H1 (cell line): ENCODE measurements at regions of chr11 and their contacts with region 1.

Region 1: DNA sequence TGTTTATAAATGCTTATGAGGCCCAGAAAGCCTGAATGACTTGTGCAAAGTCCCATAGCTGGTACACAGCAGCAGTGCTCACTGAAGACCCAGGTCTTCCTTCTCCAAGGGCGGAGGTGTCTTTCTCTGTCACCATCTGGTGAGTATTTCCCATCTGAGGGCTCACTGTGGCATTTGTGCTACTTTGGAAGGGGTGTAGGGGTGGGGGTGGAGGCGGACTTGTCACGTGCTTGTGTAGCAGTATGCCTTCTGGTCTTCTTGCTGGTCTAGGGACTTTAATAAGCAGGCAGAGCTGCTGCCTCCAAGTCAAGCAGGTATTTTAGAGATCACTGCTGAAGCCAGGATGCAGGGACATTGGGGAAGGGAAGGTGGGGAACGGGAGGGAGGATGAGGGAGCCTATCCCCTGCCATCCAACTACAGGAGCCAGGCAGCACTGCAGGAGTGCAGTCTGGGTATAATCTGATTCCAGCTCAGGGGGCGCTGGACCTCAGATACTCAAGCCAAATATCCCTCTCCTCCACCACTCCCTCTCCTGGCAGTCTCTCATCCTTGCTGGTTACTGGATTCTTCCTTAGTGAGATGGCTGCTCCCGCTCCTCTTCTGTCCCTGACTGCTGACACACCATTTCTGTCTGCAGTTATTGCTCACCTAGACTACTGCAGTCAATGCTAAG is 3.4 kb downstream of the ABCC8 start:
- DNase-seq: peak; percentile 50 to 73
- H3K4me3 ChIP-seq: no peak overlapping the region
- H3K27ac ChIP-seq: no peak overlapping the region
- H3K4me1 ChIP-seq: peaks cover 0 to 10% (median 6%) of the 10 kb centered on the region in 4 experiments; a peak in 5 of 7 replicates
- H3K27me3 ChIP-seq: peaks cover 32 to 47% (median 47%) of the 10 kb centered on the region in 4 experiments
- CTCF ChIP-seq: peak; percentile 84 to 100 (median 99)
- EP300 ChIP-seq: no peak
- POLR2A ChIP-seq: no peak
- RAD21 ChIP-seq: peak; percentile 64 to 77

Region 2: GRCh38 chr11:16969010-16969999 is 503.9 kb before region 1 on chr11:
- CTCF ChIA-PET with region 1: no interaction called
- POLR2A ChIA-PET with region 1: no interaction called
- DNase-seq: no peak
- H3K4me3 ChIP-seq: no peak overlapping the region
- H3K27ac ChIP-seq: no peak overlapping the region
- H3K4me1 ChIP-seq: 0 out of 7 replicates have a peak, but pooled peaks cover 0 to 4% (median 0%) of the 10 kb centered on the region in 4 experiments
- H3K27me3 ChIP-seq: no peaks in the 10 kb centered on the region
- CTCF ChIP-seq: no peak
- EP300 ChIP-seq: no peak
- POLR2A ChIP-seq: no peak
- RAD21 ChIP-seq: no peak

Region 3: GRCh38 chr11:17333799-17334586 is 139.2 kb before region 1 on chr11:
- CTCF ChIA-PET with region 1: no interaction called
- POLR2A ChIA-PET with region 1: no interaction called
- DNase-seq: no peak
- H3K4me3 ChIP-seq: no peak overlapping the region
- H3K27ac ChIP-seq: no peak overlapping the region
- H3K4me1 ChIP-seq: peaks cover 0 to 2% (median 0%) of the 10 kb centered on the region in 4 experiments; a peak in 1 of 7 replicates
- H3K27me3 ChIP-seq: no peaks in the 10 kb centered on the region
- CTCF ChIP-seq: no peak
- EP300 ChIP-seq: no peak
- POLR2A ChIP-seq: no peak
- RAD21 ChIP-seq: no peak

Region 4: DNA sequence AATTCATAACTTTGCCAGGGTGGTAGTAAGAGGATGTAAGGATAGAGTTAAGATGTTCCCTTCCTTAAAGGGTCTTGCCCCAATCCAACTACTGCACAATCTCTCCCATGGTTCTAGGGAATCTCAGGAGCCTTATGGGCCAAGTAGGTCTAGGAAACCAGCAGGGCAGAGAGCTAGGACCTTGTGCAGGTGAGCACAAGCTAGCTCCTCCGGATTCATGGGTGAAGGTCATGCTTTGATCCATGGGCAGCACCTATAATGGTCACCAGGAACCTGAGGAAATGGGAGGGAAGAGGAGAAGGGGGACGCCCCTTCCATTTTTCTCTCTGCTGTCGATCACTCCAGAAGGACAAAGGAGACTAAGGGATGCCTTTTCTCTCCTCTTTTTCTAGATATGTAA is 101.6 kb before region 1 on chr11:
- CTCF ChIA-PET with region 1: no interaction called
- POLR2A ChIA-PET with region 1: no interaction called
- DNase-seq: no peak
- H3K4me3 ChIP-seq: no peak overlapping the region
- H3K27ac ChIP-seq: no peak overlapping the region
- H3K4me1 ChIP-seq: no peaks in the 10 kb centered on the region
- H3K27me3 ChIP-seq: no peaks in the 10 kb centered on the region; a peak in 1 of 7 replicates
- CTCF ChIP-seq: no peak
- EP300 ChIP-seq: no peak
- POLR2A ChIP-seq: no peak
- RAD21 ChIP-seq: no peak

Region 5: GRCh38 chr11:17389211-17389956 is 83.8 kb before region 1 on chr11:
- CTCF ChIA-PET with region 1: interaction called, 111 read pairs
- POLR2A ChIA-PET with region 1: interaction called, 4 read pairs
- DNase-seq: peak; percentile 53 to 92
- H3K4me3 ChIP-seq: peak overlapping the region; percentile 51 to 80 (median 60)
- H3K27ac ChIP-seq: no peak overlapping the region
- H3K4me1 ChIP-seq: peaks cover 0 to 9% (median 2%) of the 10 kb centered on the region in 4 experiments; a peak in 3 of 7 replicates
- H3K27me3 ChIP-seq: peaks cover 0 to 7% (median 0%) of the 10 kb centered on the region in 4 experiments; a peak in 4 of 7 replicates
- CTCF ChIP-seq: peak; percentile 41 to 82 (median 78)
- EP300 ChIP-seq: peak in 1 of 2 experiments; percentile 6; a peak in 1 of 3 replicates
- POLR2A ChIP-seq: no peak
- RAD21 ChIP-seq: peak; percentile 26 to 43; a peak in 3 of 4 replicates

Region 6: GRCh38 chr11:17405232-17406005 is 67.8 kb before region 1 on chr11:
- CTCF ChIA-PET with region 1: interaction called, 46 read pairs
- POLR2A ChIA-PET with region 1: no interaction called
- DNase-seq: peak in 1 of 2 experiments; percentile 55
- H3K4me3 ChIP-seq: no peak overlapping the region
- H3K27ac ChIP-seq: no peak overlapping the region
- H3K4me1 ChIP-seq: no peaks in the 10 kb centered on the region
- H3K27me3 ChIP-seq: no peaks in the 10 kb centered on the region
- CTCF ChIP-seq: peak; percentile 26 to 59 (median 57)
- EP300 ChIP-seq: no peak
- POLR2A ChIP-seq: no peak
- RAD21 ChIP-seq: peak; percentile 32 to 53

Region 7: DNA sequence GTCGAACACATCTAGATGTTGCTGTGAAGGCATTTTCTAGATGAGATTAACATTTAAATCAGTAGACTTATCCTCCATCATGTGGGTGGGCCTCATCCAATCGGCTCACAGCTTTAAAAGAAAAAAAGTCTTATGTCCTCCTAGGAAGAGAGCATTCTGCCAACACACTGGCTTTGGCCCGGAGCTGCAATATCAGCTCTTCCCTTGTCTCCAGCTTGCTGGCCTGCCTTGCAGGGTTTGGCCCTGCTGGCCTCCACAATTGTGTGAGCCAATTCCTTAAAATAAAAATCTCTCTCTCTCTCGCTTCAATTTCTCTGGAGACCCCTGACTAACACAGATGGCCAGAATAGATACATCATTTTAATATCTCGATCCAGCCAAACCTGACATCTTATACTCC is 16.5 kb after region 1 on chr11:
- CTCF ChIA-PET with region 1: interaction called, 11 read pairs
- POLR2A ChIA-PET with region 1: no interaction called
- DNase-seq: no peak
- H3K4me3 ChIP-seq: no peak overlapping the region
- H3K27ac ChIP-seq: no peak overlapping the region
- H3K4me1 ChIP-seq: no peaks in the 10 kb centered on the region; a peak in 1 of 7 replicates
- H3K27me3 ChIP-seq: 0 out of 7 replicates have a peak, but pooled peaks cover 0 to 2% (median 0%) of the 10 kb centered on the region in 4 experiments
- CTCF ChIP-seq: no peak
- EP300 ChIP-seq: no peak
- POLR2A ChIP-seq: no peak
- RAD21 ChIP-seq: no peak

Region 8: DNA sequence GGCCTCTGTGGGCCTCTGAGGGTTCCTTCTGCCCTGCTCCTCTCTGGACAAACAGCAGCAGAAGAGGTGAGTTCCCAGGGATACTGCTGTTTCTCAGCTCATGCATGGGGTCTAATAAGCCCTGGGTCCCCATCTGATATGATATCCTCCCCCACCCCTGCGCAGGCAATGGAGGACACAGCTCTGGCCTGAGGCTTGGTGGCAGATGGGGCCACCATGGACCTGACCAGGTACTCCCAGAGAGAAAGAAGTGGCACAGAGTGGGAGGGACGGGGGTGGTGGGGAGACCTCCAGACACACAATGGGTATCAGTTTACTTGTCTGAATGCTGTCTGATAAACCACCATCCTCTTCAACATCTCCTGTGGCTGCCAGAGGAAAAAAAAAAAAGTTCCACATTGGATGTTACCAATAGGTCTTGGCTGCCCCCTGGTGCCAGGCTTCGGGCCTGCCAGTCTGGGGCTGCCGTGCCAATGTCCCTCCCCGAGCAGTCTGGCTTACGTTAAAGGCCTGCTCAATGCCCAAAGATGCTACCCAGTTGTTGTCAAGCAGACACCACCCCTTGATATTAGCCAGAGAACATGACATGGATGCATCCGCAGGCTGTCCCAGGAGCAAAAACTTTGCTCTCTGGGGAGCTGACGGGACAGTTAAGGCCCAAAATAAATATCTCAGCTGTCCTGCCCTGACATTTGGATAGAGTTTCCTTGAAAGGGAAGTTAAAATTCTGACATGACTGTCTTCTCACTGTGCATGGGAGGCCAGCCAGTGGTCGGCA is 31.3 kb after region 1 on chr11:
- CTCF ChIA-PET with region 1: interaction called, 26 read pairs
- POLR2A ChIA-PET with region 1: interaction called, 4 read pairs
- DNase-seq: peak in 1 of 2 experiments; percentile 93
- H3K4me3 ChIP-seq: no peak overlapping the region
- H3K27ac ChIP-seq: no peak overlapping the region
- H3K4me1 ChIP-seq: no peaks in the 10 kb centered on the region; a peak in 1 of 7 replicates
- H3K27me3 ChIP-seq: peaks cover 0 to 2% (median 0%) of the 10 kb centered on the region in 4 experiments; a peak in 1 of 7 replicates
- CTCF ChIP-seq: peak; percentile 87 to 96 (median 91)
- EP300 ChIP-seq: no peak
- POLR2A ChIP-seq: no peak
- RAD21 ChIP-seq: peak; percentile 95 to 98

Region 9: DNA sequence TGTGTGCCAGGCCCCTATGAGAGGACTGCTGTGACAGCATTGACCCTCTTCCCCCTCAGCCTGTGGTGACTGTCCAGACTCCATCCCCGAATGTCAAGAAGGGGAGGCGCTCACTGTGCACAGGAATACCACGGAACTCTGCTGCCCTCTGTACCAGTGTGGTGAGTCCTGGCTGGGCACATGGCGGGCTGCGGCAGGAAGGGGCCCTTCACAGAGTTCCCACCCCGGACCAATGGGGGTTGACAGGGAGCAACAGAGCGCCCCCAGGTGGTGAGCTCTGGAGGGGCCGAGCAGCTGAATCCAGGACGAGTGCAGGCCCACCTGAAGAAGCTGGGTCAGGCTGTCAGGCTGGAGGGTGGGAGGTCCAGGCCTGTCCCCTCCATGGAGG is 162.3 kb after region 1 on chr11:
- CTCF ChIA-PET with region 1: no interaction called
- POLR2A ChIA-PET with region 1: no interaction called
- DNase-seq: no peak
- H3K4me3 ChIP-seq: no peak overlapping the region
- H3K27ac ChIP-seq: no peak overlapping the region
- H3K4me1 ChIP-seq: no peaks in the 10 kb centered on the region
- H3K27me3 ChIP-seq: no peaks in the 10 kb centered on the region
- CTCF ChIP-seq: peak; percentile 47 to 56 (median 53)
- EP300 ChIP-seq: no peak
- POLR2A ChIP-seq: no peak
- RAD21 ChIP-seq: peak; percentile 24 to 36; a peak in 2 of 4 replicates